T-cell (primary cell): ENCODE measurements at regions of chr6 and their contacts with region 1.

Region 1: DNA sequence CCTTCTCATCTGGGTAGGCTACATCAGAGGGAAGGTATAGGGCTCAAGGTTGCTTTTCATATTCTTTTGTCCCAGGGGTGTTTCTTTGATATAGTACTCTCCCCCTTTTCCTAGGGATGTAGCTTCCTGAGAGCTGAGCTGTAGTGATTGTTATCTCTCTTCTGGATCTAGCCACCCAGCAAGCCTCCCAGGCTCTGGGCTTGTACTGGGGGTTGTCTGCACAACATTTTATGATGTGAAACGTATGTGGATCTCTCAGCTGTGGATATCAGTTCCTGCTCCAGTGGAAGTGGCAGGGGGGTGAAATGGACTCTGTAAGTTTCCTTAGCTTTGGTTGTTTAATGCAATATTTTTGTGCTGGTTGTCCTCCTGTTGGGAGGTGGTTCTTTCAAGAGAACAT is 437.3 kb upstream of the SYNCRIP start:
- DNase-seq: no peak
- ATAC-seq: no peak
- H3K4me3 ChIP-seq: no peak overlapping the region
- H3K4me3 Mint-ChIP-seq: no peak overlapping the region
- H3K27ac ChIP-seq: no peak overlapping the region
- H3K27ac Mint-ChIP-seq: no peak overlapping the region
- H3K4me1 ChIP-seq: no peaks in the 10 kb centered on the region
- H3K4me1 Mint-ChIP-seq: no peaks in the 10 kb centered on the region
- H3K27me3 ChIP-seq: no peaks in the 10 kb centered on the region
- H3K27me3 Mint-ChIP-seq: no peaks in the 10 kb centered on the region

Region 2: DNA sequence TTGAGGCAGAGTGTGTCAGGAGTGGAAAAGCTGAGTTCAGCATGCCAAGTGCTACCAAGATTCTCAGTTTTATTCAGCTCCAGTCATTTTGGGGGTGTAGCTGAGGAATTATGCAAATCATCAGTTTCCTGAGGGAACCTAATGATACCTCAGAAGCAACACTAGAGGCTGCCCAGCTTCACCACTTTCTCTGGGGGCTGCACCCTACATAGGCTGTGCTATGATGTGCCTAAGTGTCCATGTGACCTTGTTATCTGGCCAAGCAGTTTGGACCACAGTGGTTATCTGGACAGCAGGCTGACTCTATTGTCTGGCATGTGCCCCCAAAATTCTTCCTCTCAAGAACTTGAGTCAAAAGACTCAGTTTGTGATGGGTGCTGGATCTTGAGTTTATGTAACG is 62.7 kb before region 1 on chr6:
- CTCF ChIA-PET with region 1: no interaction called
- POLR2A ChIA-PET with region 1: interaction called in 1 of 2 experiments, 11 read pairs
- DNase-seq: no peak
- ATAC-seq: no peak
- H3K4me3 ChIP-seq: no peak overlapping the region
- H3K4me3 Mint-ChIP-seq: no peak overlapping the region
- H3K27ac ChIP-seq: no peak overlapping the region
- H3K27ac Mint-ChIP-seq: no peak overlapping the region
- H3K4me1 ChIP-seq: no peaks in the 10 kb centered on the region
- H3K4me1 Mint-ChIP-seq: no peaks in the 10 kb centered on the region
- H3K27me3 ChIP-seq: no peaks in the 10 kb centered on the region
- H3K27me3 Mint-ChIP-seq: peaks cover 0 to 2% of the 10 kb centered on the region in 2 donors